MCF 10A (cell line): ENCODE measurements at regions of chr20 and their contacts with region 1.

Region 1: DNA sequence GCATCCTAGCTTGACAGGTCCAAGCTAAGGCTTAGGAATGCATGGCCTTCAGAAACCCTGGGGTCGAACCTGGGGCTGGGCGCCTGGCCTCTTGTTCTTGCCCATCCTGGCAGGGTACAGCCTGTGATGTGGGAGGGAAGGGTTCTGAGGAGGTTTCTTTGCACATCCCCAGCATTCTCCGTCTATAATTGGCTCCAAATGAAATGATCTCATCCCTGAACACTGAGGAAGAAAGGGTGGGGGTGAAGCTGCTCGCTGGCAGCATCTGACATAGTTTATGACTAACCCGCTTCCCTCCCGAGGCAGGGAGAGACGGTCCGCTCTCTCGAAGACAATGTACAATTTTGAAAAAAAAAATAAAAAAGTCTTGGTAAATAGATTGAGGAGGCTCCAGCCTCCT is 67.1 kb upstream of the ZNFX1 start:
- DNase-seq: peak; percentile 92
- H3K4me3 Mint-ChIP-seq: peak overlapping the region; percentile 50
- H3K27ac Mint-ChIP-seq: peak overlapping the region; percentile 91
- H3K4me1 Mint-ChIP-seq: peaks cover 44% of the 10 kb centered on the region
- H3K27me3 Mint-ChIP-seq: no peaks in the 10 kb centered on the region
- CTCF ChIP-seq: no peak

Region 2: GRCh38 chr20:49140834-49141233 is 204.1 kb before region 1 on chr20:
- CTCF ChIA-PET with region 1: no interaction called
- POLR2A ChIA-PET with region 1: no interaction called
- intact Hi-C with region 1: no loop called
- DNase-seq: no peak
- H3K4me3 Mint-ChIP-seq: no peak overlapping the region
- H3K27ac Mint-ChIP-seq: no peak overlapping the region
- H3K4me1 Mint-ChIP-seq: no peaks in the 10 kb centered on the region
- H3K27me3 Mint-ChIP-seq: no peaks in the 10 kb centered on the region
- CTCF ChIP-seq: no peak

Region 3: DNA sequence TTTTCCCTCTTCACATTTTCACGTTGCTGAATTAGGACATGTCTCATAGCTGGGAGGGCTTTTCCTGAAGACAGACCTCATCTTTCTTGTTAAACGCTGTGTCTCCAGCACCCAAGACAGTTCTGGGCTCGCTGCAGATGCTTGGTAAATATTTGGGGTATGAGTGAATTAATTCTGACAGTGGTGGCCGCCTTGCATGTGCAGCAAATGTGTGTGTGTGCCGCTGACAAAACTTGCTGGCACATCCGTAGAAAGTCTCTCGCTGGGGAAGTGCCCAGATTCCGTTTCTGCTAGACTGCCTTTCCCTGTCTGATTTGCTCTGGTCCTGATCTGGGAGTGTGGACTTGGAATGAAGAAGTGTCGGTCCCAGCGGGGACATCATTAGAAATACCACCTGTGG is 18.9 kb before region 1 on chr20:
- CTCF ChIA-PET with region 1: no interaction called
- POLR2A ChIA-PET with region 1: no interaction called
- intact Hi-C with region 1: no loop called
- DNase-seq: no peak
- H3K4me3 Mint-ChIP-seq: no peak overlapping the region
- H3K27ac Mint-ChIP-seq: no peak overlapping the region
- H3K4me1 Mint-ChIP-seq: no peaks in the 10 kb centered on the region
- H3K27me3 Mint-ChIP-seq: peaks cover 12% of the 10 kb centered on the region
- CTCF ChIP-seq: no peak

Region 4: GRCh38 chr20:49356676-49357075 is 11.7 kb after region 1 on chr20:
- CTCF ChIA-PET with region 1: interaction called, 8 read pairs
- POLR2A ChIA-PET with region 1: interaction called, 18 read pairs
- intact Hi-C with region 1: no loop called
- DNase-seq: no peak
- H3K4me3 Mint-ChIP-seq: no peak overlapping the region
- H3K27ac Mint-ChIP-seq: no peak overlapping the region
- H3K4me1 Mint-ChIP-seq: peaks cover 12% of the 10 kb centered on the region
- H3K27me3 Mint-ChIP-seq: no peaks in the 10 kb centered on the region
- CTCF ChIP-seq: no peak

Region 5: DNA sequence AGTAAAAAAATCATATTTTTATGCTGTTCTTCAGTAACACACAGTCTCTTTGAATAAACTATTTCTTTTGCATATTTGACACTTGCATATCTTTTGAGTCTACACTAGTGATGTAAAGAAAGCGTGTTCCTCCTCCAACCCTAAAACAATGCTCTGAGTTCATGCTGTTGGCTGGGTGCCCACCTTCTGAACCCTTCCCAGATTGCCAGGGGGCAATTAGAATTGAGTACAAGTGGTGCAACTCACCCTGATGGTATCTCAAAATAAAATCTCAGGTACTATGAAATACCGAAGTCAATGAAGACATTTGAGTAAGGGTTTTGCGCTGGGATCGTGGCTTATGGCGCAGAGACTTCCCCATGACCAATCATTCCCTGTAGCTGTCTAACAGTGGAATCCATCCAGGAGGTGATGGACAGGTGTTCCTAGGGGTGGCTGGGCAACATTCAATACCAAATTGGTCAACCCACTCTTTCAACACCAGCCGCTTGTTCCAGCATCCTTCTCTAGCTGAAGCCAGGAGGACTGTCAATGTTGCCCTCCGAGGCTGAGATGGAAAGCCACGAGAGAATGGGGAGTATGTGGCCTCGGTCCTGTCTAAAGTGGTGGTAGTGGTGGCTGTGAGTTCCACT is 27.2 kb after region 1 on chr20:
- CTCF ChIA-PET with region 1: interaction called, 5 read pairs
- POLR2A ChIA-PET with region 1: interaction called, 25 read pairs
- intact Hi-C with region 1: no loop called
- DNase-seq: peak; percentile 95
- H3K4me3 Mint-ChIP-seq: peak overlapping the region; percentile 29
- H3K27ac Mint-ChIP-seq: no peak overlapping the region
- H3K4me1 Mint-ChIP-seq: peaks cover 14% of the 10 kb centered on the region
- H3K27me3 Mint-ChIP-seq: no peaks in the 10 kb centered on the region
- CTCF ChIP-seq: no peak

Region 6: GRCh38 chr20:49397525-49397924 is 52.5 kb after region 1 on chr20:
- CTCF ChIA-PET with region 1: no interaction called
- POLR2A ChIA-PET with region 1: interaction called, 10 read pairs
- intact Hi-C with region 1: no loop called
- DNase-seq: peak; percentile 86
- H3K4me3 Mint-ChIP-seq: no peak overlapping the region
- H3K27ac Mint-ChIP-seq: no peak overlapping the region
- H3K4me1 Mint-ChIP-seq: peaks cover 20% of the 10 kb centered on the region
- H3K27me3 Mint-ChIP-seq: no peaks in the 10 kb centered on the region
- CTCF ChIP-seq: no peak

Region 7: DNA sequence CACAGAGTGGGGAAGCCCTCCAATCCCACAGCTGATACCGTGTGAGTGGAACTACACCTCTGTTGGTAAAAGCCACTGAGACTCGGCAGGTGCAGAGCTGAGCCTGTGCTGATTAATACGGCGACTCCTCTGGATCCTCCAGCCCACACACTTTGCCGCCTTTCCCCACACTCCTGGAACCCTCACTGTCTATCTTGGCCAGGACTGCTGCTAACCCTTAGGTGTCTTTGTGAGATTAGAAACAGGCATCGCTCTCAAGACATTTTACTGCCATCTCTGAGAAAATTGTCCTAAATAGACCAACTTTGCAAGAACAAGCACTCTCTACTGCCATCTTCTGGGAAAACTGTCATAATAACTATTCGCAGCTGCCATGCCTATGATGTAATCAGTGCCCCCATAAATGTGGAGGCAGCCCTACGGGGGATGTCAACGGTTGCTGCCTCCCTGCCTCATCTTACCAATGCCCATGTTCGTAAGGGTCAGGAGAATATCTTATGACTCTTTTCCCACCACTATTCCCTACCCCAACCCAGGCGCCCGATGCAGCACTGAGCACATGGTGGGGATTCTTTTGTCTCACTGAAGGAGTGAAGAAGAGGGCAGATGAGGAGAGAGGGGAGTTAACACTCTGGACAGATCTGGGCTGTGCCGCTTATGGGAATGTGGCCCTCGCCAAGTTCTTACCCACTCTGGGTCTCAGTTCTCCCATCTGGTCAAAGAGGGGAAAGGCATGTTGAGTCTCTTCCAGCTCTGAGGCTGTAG is 163.6 kb after region 1 on chr20:
- CTCF ChIA-PET with region 1: interaction called, 237 read pairs
- POLR2A ChIA-PET with region 1: interaction called, 4 read pairs
- intact Hi-C with region 1: no loop called
- DNase-seq: peak; percentile 57
- H3K4me3 Mint-ChIP-seq: no peak overlapping the region
- H3K27ac Mint-ChIP-seq: no peak overlapping the region
- H3K4me1 Mint-ChIP-seq: peaks cover 16% of the 10 kb centered on the region
- H3K27me3 Mint-ChIP-seq: no peaks in the 10 kb centered on the region
- CTCF ChIP-seq: peak; percentile 69